Naive thymus-derived CD4-positive, alpha-beta T cell (primary cell): ENCODE measurements at regions of chr5 and their contacts with region 1.

Region 1: DNA sequence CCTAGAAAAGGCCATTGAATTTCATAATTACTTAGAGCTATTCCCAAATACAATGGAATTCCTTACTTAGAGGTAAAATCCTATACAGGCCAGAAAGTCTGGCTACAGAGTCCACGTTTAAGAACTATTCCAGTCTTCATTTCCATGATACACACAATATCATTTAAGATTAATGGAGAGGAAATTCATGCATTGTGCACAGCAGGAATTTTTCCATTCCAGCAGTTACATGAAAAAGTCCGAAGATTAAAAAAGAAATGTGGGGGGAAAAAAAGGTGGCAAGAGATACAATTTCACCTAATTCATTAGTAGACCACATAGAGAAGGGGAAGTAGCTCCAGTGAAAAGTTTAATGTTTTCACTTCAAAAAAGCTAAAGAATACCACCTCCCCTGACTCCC is 63.1 kb downstream of the CHD1 start:
- DNase-seq: no peak
- ATAC-seq: no peak
- H3K4me3 ChIP-seq: no peak overlapping the region
- H3K4me3 Mint-ChIP-seq: no peak overlapping the region
- H3K27ac ChIP-seq: no peak overlapping the region
- H3K27ac Mint-ChIP-seq: peak overlapping the region in 3 of 9 donors; percentile 34 to 55 (median 34)
- H3K4me1 ChIP-seq: no peaks in the 10 kb centered on the region
- H3K4me1 Mint-ChIP-seq: peaks cover 0 to 14% (median 6%) of the 10 kb centered on the region in 7 donors
- H3K27me3 ChIP-seq: no peaks in the 10 kb centered on the region
- H3K27me3 Mint-ChIP-seq: no peaks in the 10 kb centered on the region

Region 2: GRCh38 chr5:98510143-98510985 is 355.3 kb before region 1 on chr5:
- CTCF ChIA-PET with region 1: no interaction called
- POLR2A ChIA-PET with region 1: no interaction called
- intact Hi-C with region 1: no loop called
- DNase-seq: no peak
- ATAC-seq: no peak
- H3K4me3 ChIP-seq: no peak overlapping the region
- H3K4me3 Mint-ChIP-seq: no peak overlapping the region
- H3K27ac ChIP-seq: no peak overlapping the region
- H3K27ac Mint-ChIP-seq: peak overlapping the region in 1 of 9 donors; percentile 35
- H3K4me1 ChIP-seq: no peaks in the 10 kb centered on the region
- H3K4me1 Mint-ChIP-seq: no peaks in the 10 kb centered on the region
- H3K27me3 ChIP-seq: no peaks in the 10 kb centered on the region
- H3K27me3 Mint-ChIP-seq: peaks cover 0 to 17% (median 2%) of the 10 kb centered on the region in 5 donors

Region 3: DNA sequence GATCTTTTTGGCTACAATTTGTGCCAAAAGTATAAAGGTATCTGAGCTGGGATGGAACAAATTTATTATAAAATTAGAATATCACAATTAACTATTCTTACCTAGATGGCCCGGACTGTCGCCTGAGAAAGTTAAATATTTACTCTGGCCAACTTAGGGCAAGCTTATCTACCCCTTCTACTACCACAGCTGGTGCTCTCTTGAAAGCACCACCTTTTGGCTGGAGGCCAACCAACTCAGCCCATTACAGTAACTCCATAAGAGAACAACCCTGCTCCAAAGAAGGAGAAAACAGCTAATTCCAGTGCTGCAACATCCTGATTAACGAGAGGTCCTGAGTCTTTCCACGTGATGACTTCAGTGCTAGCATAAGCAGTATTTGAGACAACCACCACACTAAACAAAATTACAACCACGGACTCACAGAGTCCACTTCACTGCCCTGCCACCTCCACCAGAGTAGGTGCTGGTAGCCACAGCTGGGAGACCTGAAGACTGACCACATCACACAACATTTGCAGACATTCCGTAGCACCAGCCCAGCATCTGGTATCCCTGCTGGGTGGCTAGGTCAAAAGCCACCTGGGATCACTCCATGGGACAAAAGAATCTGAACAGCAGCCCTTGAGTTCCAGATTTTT is 49.0 kb before region 1 on chr5:
- CTCF ChIA-PET with region 1: no interaction called
- POLR2A ChIA-PET with region 1: no interaction called
- intact Hi-C with region 1: no loop called
- DNase-seq: no peak
- ATAC-seq: no peak
- H3K4me3 ChIP-seq: no peak overlapping the region
- H3K4me3 Mint-ChIP-seq: no peak overlapping the region
- H3K27ac ChIP-seq: no peak overlapping the region
- H3K27ac Mint-ChIP-seq: no peak overlapping the region
- H3K4me1 ChIP-seq: no peaks in the 10 kb centered on the region
- H3K4me1 Mint-ChIP-seq: peaks cover 0 to 4% (median 0%) of the 10 kb centered on the region in 7 donors
- H3K27me3 ChIP-seq: no peaks in the 10 kb centered on the region
- H3K27me3 Mint-ChIP-seq: no peaks in the 10 kb centered on the region

Region 4: DNA sequence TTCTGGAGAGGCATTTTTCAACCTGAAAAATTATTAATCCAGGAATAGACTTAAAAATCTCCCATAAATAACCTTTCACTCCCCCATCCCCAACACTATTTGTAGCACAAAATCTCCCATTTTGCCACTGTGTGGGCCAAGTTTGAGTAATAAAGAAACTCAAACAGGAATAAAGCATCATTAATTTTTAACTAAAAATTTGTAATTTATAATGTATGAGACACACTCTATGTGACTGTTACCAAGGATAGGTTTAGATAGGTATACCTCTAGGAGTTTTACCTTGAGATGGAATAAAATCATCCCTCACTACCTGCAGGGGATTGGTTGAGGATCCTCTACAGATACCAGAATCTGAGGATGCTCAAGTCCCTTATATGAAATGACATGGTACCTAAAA is 33.1 kb after region 1 on chr5:
- CTCF ChIA-PET with region 1: interaction called, 3 read pairs
- POLR2A ChIA-PET with region 1: no interaction called
- intact Hi-C with region 1: loop called in 1 of 2 experiments (anchors 5 kb)
- DNase-seq: no peak
- ATAC-seq: no peak
- H3K4me3 ChIP-seq: no peak overlapping the region
- H3K4me3 Mint-ChIP-seq: no peak overlapping the region
- H3K27ac ChIP-seq: no peak overlapping the region
- H3K27ac Mint-ChIP-seq: no peak overlapping the region
- H3K4me1 ChIP-seq: no peaks in the 10 kb centered on the region
- H3K4me1 Mint-ChIP-seq: peaks cover 0 to 17% (median 5%) of the 10 kb centered on the region in 7 donors
- H3K27me3 ChIP-seq: no peaks in the 10 kb centered on the region
- H3K27me3 Mint-ChIP-seq: no peaks in the 10 kb centered on the region